Activated naive CD4-positive, alpha-beta T cell treated with anti-CD3 and anti-CD28 coated beads, Interleukin-2, amount 10 ng/mL, durations not matched to agents 7 days and 5 days (primary cell): ENCODE measurements at regions of chr17 and their contacts with region 1.

Region 1: GRCh38 chr17:62109378-62109902 is 44.4 kb upstream of the MED13 start:
- DNase-seq: peak; percentile 79
- H3K4me3 Mint-ChIP-seq: no peak overlapping the region
- H3K27ac Mint-ChIP-seq: no peak overlapping the region
- H3K4me1 Mint-ChIP-seq: no peaks in the 10 kb centered on the region
- H3K27me3 Mint-ChIP-seq: peaks cover 17% of the 10 kb centered on the region

Region 2: GRCh38 chr17:61412143-61412859 is 697.1 kb before region 1 on chr17:
- CTCF ChIA-PET with region 1: interaction called, 10 read pairs
- DNase-seq: peak; percentile 78
- H3K4me3 Mint-ChIP-seq: peak overlapping the region; percentile 60
- H3K27ac Mint-ChIP-seq: no peak overlapping the region
- H3K4me1 Mint-ChIP-seq: peaks cover 26% of the 10 kb centered on the region
- H3K27me3 Mint-ChIP-seq: peaks cover 98% of the 10 kb centered on the region

Region 3: GRCh38 chr17:61635913-61636432 is 473.5 kb before region 1 on chr17:
- CTCF ChIA-PET with region 1: interaction called, 18 read pairs
- DNase-seq: peak; percentile 74
- H3K4me3 Mint-ChIP-seq: no peak overlapping the region
- H3K27ac Mint-ChIP-seq: no peak overlapping the region
- H3K4me1 Mint-ChIP-seq: no peaks in the 10 kb centered on the region
- H3K27me3 Mint-ChIP-seq: peaks cover 26% of the 10 kb centered on the region

Region 4: DNA sequence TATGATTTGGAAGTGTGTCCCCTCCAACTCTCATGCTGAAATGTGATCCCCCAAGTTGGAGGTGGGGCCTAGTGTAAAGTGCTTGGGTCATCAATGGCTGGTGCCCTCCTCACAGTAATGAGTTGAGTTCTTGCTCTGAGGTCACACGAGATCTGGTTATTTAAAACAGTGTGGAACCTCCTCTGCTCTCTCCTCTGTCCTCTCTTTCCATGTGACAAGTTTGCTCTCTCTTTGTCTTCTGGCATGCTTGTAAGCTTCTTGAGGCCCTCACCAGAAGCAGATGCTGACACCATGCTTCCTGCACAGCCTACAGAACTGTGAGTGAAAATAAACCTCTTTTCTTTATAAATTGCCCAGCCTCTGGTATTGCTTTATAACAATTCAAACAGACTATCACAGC is 266.0 kb before region 1 on chr17:
- CTCF ChIA-PET with region 1: interaction called, 12 read pairs
- DNase-seq: no peak
- H3K4me3 Mint-ChIP-seq: no peak overlapping the region
- H3K27ac Mint-ChIP-seq: no peak overlapping the region
- H3K4me1 Mint-ChIP-seq: no peaks in the 10 kb centered on the region
- H3K27me3 Mint-ChIP-seq: no peaks in the 10 kb centered on the region

Region 5: DNA sequence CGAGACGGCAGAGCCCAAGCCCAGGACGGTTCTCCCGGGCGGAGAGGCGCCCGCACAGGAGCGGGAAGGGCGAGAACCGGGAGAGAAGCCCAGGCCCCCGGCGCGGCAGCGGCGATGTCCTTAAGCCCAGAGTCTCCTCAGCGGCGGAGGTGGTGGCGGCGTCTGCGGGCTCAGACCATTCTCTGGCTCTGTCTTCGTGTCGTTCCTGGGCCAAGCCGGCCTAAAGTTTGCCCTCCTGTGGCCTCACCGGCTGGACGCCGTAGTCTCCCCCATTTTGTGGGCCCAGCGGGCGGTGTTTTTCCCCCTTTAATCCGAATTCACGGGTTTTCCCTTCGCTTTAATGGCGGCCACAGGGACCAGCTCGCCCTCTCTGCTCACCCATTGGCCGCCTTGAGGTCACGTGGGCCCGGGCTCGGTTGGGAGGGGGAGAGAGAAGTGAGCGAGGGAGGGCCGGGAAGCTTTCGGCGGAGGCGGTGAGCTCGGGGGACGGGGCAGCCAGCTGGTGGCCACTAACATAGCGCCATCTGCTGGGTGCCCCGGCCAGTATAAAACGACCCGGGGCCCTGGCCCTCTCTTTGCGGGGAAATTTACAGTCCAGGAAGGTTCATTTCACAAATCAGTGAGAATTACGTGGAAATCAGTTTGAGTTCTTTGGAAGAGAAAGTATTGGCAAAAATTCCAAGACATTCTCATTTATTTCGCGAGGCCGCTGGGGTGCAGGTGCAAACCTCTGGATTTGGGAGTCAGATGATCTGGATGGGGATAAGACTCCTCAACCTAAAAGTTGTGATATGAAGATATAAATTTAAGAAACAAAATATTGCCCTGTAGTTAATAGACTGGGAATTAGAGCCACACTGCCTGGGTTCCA is 43.6 kb before region 1 on chr17:
- CTCF ChIA-PET with region 1: interaction called, 10 read pairs
- DNase-seq: peak; percentile 99
- H3K4me3 Mint-ChIP-seq: peak overlapping the region; percentile 93
- H3K27ac Mint-ChIP-seq: peak overlapping the region; percentile 97
- H3K4me1 Mint-ChIP-seq: peaks cover 31% of the 10 kb centered on the region
- H3K27me3 Mint-ChIP-seq: peaks cover 8% of the 10 kb centered on the region

Region 6: DNA sequence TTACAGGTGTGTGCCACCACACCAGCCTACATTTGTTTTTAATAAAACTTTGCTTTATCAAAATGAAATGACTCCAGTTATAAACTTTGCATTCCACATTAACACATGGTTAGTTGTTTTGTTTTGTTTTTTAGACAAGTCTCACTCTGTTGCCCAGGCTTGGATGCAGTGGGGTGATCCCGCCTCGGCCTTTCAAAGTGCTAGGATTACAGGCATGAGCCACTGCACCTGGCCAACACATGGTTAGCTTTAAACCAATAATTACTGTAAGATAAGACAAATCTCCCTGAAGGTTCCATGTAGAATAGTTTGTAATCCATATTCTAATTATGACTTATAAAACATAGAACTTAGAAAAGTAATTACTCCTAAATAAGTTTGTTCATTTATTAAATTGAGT is 45.5 kb after region 1 on chr17:
- CTCF ChIA-PET with region 1: no interaction called
- DNase-seq: no peak
- H3K4me3 Mint-ChIP-seq: no peak overlapping the region
- H3K27ac Mint-ChIP-seq: no peak overlapping the region
- H3K4me1 Mint-ChIP-seq: no peaks in the 10 kb centered on the region
- H3K27me3 Mint-ChIP-seq: peaks cover 9% of the 10 kb centered on the region